Dorsolateral prefrontal cortex (tissue), 120 donors: ENCODE measurements at regions of chr3 and their contacts with region 1.

Region 1: DNA sequence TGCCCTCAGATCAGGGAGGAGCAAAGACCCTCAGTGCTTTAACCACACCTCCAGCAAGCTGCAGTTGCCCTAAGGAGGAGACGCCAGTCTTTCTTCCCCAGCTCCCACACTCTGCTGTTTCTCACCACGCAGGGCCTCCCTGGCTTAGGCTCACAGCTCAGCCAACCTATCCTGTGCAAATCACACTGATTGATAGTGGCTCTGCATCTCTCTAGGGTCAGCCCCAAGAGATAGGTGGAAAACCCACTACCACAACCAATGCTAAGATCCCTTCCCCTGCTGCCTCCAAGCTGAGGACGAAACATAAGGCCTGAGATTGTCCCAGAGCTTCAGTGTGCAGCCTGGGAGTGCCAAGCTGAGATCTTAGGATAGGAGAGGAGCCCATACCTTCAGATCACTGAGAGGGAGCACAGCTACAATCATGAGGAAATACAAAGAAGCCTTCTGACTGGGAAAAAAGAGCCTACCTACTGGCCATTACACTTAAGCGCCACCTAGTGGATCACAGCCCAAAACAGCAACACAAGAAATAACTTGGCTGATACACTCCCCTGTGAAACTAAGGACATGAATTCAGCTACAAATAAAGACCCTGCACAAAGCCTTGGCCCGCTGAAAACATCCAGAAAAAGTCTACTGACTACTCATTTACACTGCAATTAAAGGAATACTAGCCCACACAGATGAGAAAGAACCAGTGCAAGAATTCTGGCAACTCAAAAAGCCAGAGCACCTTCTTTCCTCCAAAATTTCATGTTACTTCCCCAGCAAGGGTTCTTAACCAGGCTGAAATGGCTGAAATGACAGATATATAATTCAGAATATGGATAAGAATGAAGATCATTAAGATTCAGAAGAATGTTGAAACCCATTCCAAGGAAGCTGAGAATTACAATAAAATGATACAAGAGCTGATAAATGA is 271.5 kb upstream of the DCBLD2 start:
- DNase-seq: no peak
- H3K4me3 ChIP-seq: no peak overlapping the region
- H3K27ac ChIP-seq: no peak overlapping the region
- H3K27me3 ChIP-seq: no peaks in the 10 kb centered on the region
- CTCF ChIP-seq: peak in 53 of 56 donors; percentile 23 to 78 (median 53)

Region 2: DNA sequence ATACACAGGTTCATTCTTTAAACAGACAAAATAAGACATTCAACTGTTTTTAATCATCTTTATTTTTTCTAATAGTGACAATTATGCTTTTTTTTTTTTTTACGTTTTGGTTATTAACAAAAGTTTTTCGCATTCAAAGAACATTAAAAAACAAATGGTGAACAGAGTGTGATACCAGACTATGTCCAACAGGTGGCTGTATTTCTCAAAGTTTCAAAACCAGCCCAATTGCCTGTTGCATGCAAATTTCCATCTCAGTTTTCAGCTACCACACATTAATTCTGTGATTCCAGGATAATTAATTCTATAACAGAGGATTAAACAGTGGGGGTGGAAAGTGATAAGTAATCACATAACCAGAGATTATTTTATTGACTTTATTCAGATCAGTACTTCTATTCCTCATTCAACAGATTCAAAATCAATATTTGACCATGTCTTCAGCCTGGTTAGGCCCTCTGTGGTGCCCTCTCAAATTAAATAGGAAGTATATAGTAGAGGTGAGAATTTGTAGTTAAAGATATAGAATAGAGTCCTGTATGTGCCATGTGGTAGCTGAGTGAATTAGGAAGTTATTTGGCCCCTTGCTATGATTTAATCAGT is 149.3 kb before region 1 on chr3:
- intact Hi-C with region 1: loop called in 1 of 2 experiments (anchors 10 kb)
- DNase-seq: no peak
- H3K4me3 ChIP-seq: no peak overlapping the region
- H3K27ac ChIP-seq: no peak overlapping the region
- H3K27me3 ChIP-seq: no peaks in the 10 kb centered on the region
- CTCF ChIP-seq: peak; percentile 57 to 90 (median 75)

Region 3: GRCh38 chr3:99199021-99199420 is 26.0 kb after region 1 on chr3:
- intact Hi-C with region 1: no loop called
- DNase-seq: no peak
- H3K4me3 ChIP-seq: no peak overlapping the region
- H3K27ac ChIP-seq: no peak overlapping the region
- H3K27me3 ChIP-seq: no peaks in the 10 kb centered on the region
- CTCF ChIP-seq: no peak